B cell (primary cell): ENCODE measurements at regions of chr11 and their contacts with region 1.

Region 1: GRCh38 chr11:14300661-14301304 is 58.2 kb downstream of the RRAS2 start:
- DNase-seq: peak; percentile 75
- ATAC-seq: peak; percentile 93
- H3K4me3 ChIP-seq: no peak overlapping the region
- H3K4me3 Mint-ChIP-seq: no peak overlapping the region
- H3K27ac ChIP-seq: no peak overlapping the region
- H3K27ac Mint-ChIP-seq: no peak overlapping the region
- H3K4me1 ChIP-seq: peaks cover 45 to 64% of the 10 kb centered on the region in 2 donors
- H3K4me1 Mint-ChIP-seq: peaks cover 59% of the 10 kb centered on the region
- H3K27me3 ChIP-seq: no peaks in the 10 kb centered on the region
- H3K27me3 Mint-ChIP-seq: no peaks in the 10 kb centered on the region
- CTCF ChIP-seq: peak; percentile 80

Region 2: DNA sequence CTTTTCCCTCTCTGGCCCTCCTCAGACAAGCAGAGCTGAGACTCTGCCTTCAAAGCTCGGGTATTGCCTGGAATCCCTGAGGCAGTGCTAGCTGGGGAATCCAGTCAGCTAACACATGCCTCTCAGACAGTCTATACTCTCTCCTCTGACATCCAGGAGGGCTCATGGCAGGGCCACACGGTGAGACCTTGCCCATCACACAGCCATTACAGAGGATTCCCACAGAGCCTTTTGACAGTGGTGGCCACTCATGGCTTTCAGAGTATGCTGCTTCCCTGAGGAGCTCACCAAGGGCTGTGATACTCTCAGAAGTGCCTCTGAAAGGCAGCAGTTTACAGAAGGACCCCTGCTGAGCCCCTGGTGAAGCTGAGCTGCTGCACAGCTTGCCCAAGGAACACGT is 107.1 kb before region 1 on chr11:
- CTCF ChIA-PET with region 1: no interaction called
- POLR2A ChIA-PET with region 1: no interaction called
- intact Hi-C with region 1: no loop called
- DNase-seq: no peak
- ATAC-seq: no peak
- H3K4me3 ChIP-seq: no peak overlapping the region
- H3K4me3 Mint-ChIP-seq: no peak overlapping the region
- H3K27ac ChIP-seq: no peak overlapping the region
- H3K27ac Mint-ChIP-seq: no peak overlapping the region
- H3K4me1 ChIP-seq: peaks cover 2 to 7% of the 10 kb centered on the region in 2 donors
- H3K4me1 Mint-ChIP-seq: peaks cover 12% of the 10 kb centered on the region
- H3K27me3 ChIP-seq: no peaks in the 10 kb centered on the region
- H3K27me3 Mint-ChIP-seq: peaks cover 4% of the 10 kb centered on the region
- CTCF ChIP-seq: no peak

Region 3: DNA sequence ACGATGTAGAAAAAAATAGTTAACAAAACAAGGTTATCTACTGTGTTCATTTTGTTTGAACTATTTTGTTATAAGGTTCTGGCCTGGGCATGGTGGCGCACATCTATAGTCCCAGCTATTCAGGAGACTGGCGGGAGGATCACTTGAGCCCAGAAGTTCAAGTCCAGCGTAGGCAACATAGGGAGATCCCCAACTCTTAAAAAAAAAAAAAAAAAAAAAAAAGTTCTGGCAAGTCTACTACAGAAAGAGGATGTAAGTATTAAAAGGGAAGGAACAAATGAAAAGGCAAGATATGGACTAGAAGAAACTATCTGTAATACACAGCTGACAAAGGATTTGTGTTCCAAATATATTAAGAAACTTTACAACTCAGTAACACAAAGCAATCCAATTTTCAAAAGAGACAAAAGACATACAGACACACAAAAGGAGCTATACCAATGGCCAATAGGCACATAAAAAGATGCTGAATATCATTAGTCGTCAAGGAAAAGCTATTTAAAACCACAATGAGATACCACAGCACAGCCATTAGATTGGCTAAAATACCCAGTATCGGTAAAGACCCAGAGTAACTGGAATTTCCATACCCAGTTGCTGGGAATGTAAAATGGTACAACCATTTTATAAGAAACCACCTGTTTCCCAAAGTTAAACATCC is 30.8 kb after region 1 on chr11:
- CTCF ChIA-PET with region 1: interaction called, 14 read pairs
- POLR2A ChIA-PET with region 1: no interaction called
- intact Hi-C with region 1: no loop called
- DNase-seq: peak; percentile 70
- ATAC-seq: peak; percentile 75
- H3K4me3 ChIP-seq: peak overlapping the region in 1 of 5 experiments; percentile 13
- H3K4me3 Mint-ChIP-seq: peak overlapping the region; percentile 70
- H3K27ac ChIP-seq: peak overlapping the region; percentile 53 to 74
- H3K27ac Mint-ChIP-seq: peak overlapping the region; percentile 79
- H3K4me1 ChIP-seq: peaks cover 66 to 75% of the 10 kb centered on the region in 2 donors
- H3K4me1 Mint-ChIP-seq: peaks cover 72% of the 10 kb centered on the region
- H3K27me3 ChIP-seq: no peaks in the 10 kb centered on the region
- H3K27me3 Mint-ChIP-seq: no peaks in the 10 kb centered on the region
- CTCF ChIP-seq: no peak

Region 4: GRCh38 chr11:14380947-14381561 is 80.3 kb after region 1 on chr11:
- CTCF ChIA-PET with region 1: interaction called, 14 read pairs
- POLR2A ChIA-PET with region 1: no interaction called
- intact Hi-C with region 1: no loop called
- DNase-seq: peak; percentile 85
- ATAC-seq: peak; percentile 96
- H3K4me3 ChIP-seq: peak overlapping the region in 4 of 5 experiments; percentile 47 to 69 (median 62)
- H3K4me3 Mint-ChIP-seq: peak overlapping the region; percentile 89
- H3K27ac ChIP-seq: peak overlapping the region; percentile 36 to 56
- H3K27ac Mint-ChIP-seq: peak overlapping the region; percentile 73
- H3K4me1 ChIP-seq: peaks cover 12 to 14% of the 10 kb centered on the region in 2 donors
- H3K4me1 Mint-ChIP-seq: peaks cover 19% of the 10 kb centered on the region
- H3K27me3 ChIP-seq: peaks cover 0 to 3% (median 0%) of the 10 kb centered on the region in 4 experiments
- H3K27me3 Mint-ChIP-seq: peaks cover 6% of the 10 kb centered on the region
- CTCF ChIP-seq: no peak

Region 5: GRCh38 chr11:14413307-14414069 is 112.7 kb after region 1 on chr11:
- CTCF ChIA-PET with region 1: interaction called, 73 read pairs
- POLR2A ChIA-PET with region 1: no interaction called
- intact Hi-C with region 1: loop called (anchors 1 kb)
- DNase-seq: no peak
- ATAC-seq: no peak
- H3K4me3 ChIP-seq: no peak overlapping the region
- H3K4me3 Mint-ChIP-seq: no peak overlapping the region
- H3K27ac ChIP-seq: no peak overlapping the region
- H3K27ac Mint-ChIP-seq: no peak overlapping the region
- H3K4me1 ChIP-seq: peaks cover 11 to 13% of the 10 kb centered on the region in 2 donors
- H3K4me1 Mint-ChIP-seq: peaks cover 15% of the 10 kb centered on the region
- H3K27me3 ChIP-seq: no peaks in the 10 kb centered on the region
- H3K27me3 Mint-ChIP-seq: no peaks in the 10 kb centered on the region
- CTCF ChIP-seq: no peak

Region 6: GRCh38 chr11:14435717-14436512 is 135.1 kb after region 1 on chr11:
- CTCF ChIA-PET with region 1: interaction called, 10 read pairs
- POLR2A ChIA-PET with region 1: no interaction called
- intact Hi-C with region 1: no loop called
- DNase-seq: no peak
- ATAC-seq: no peak
- H3K4me3 ChIP-seq: no peak overlapping the region
- H3K4me3 Mint-ChIP-seq: no peak overlapping the region
- H3K27ac ChIP-seq: no peak overlapping the region
- H3K27ac Mint-ChIP-seq: no peak overlapping the region
- H3K4me1 ChIP-seq: peaks cover 11% of the 10 kb centered on the region in 2 donors
- H3K4me1 Mint-ChIP-seq: peaks cover 24% of the 10 kb centered on the region
- H3K27me3 ChIP-seq: no peaks in the 10 kb centered on the region
- H3K27me3 Mint-ChIP-seq: no peaks in the 10 kb centered on the region
- CTCF ChIP-seq: no peak